HepG2 (cell line): ENCODE measurements at regions of chr6 and their contacts with region 1.

Region 1: GRCh38 chr6:53309059-53309900 is 39.5 kb downstream of the ELOVL5 start:
- DNase-seq: peak; percentile 56
- ATAC-seq: peak; percentile 60
- H3K4me3 ChIP-seq: no peak overlapping the region
- H3K27ac ChIP-seq: no peak overlapping the region
- H3K4me1 ChIP-seq: peaks cover 48% of the 10 kb centered on the region
- H3K27me3 ChIP-seq: no peaks in the 10 kb centered on the region
- CTCF ChIP-seq: no peak
- EP300 ChIP-seq: no peak
- POLR2A ChIP-seq: no peak
- RAD21 ChIP-seq: no peak

Region 2: DNA sequence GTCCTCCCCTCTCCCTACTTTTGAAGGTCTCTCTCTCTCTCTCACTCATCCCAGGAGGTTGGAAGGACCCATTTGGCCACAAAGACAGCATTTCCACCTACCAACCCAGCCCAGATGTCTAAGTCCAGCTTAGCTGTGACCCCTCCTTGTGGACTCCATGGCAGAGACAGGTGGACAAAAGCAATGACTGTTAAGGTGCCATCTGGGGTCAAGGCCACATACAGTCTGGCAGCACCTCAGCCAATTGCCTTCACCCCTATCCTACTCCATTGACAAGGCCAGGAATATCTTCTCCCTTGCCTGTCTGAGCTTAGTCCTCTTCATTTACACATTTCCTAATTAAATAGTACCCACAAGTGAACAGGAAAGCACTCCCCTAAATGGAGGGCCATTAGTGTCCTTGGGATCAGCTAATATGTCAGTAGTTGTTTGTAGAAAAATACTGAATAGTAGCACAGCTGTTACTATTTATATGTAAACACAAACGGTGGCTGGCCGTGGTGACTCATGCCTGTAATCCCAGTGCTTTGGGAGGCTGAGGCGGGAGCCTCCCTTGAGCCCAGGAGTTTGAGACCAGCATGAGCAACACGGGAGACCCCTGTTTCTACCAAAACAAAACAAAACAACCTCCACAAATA is 189.4 kb before region 1 on chr6:
- CTCF ChIA-PET with region 1: no interaction called
- POLR2A ChIA-PET with region 1: no interaction called
- in situ Hi-C with region 1: no loop called
- intact Hi-C with region 1: loop called (anchors 10 kb)
- DNase-seq: peak; percentile 92
- ATAC-seq: peak; percentile 92
- H3K4me3 ChIP-seq: peak overlapping the region in 1 of 3 experiments; percentile 27; a peak in 1 of 6 replicates
- H3K27ac ChIP-seq: peak overlapping the region; percentile 65
- H3K4me1 ChIP-seq: peaks cover 48% of the 10 kb centered on the region
- H3K27me3 ChIP-seq: no peaks in the 10 kb centered on the region
- CTCF ChIP-seq: 0 out of 2 replicates have a peak, but pooled peaks have one; percentile 30
- EP300 ChIP-seq: peak; percentile 20 to 72; a peak in 3 of 4 replicates
- POLR2A ChIP-seq: no peak
- RAD21 ChIP-seq: no peak